Activated CD4-positive, alpha-beta memory T cell treated with anti-CD3 and anti-CD28 coated beads for 36 hours (primary cell): ENCODE measurements at regions of chr18 and their contacts with region 1.

Region 1: DNA sequence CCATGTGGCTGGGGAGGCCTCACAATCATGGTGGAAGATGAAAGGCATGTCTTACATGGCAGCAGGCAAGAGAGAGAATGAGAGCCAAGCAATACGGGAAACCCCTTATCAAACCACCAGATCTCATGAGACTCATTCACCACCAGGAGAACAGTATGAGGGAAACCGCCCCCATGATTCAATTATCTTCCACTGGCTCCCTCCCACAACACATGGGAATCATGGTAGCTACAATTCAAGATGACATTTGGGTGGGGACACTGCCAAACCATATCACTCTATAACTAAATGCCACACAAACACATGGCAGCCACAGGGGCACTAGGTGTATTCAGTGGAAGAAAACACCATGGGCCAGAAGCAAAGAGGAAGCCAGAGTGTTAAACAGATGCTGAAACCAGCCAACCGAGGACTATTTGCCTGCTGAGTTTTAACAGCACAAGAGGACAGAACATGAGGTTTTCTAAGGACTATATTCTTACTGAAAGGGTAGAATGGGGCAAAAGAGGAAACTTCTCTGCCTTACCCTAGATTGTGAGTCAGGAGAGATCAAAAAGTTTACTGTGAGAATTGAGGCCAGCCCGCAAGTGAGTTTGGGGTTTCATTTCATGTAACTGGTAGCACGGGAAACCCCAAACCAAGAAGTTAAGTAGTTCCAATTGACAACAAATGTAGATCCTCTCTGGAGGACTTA is 49.2 kb downstream of the SIGLEC15 start:
- DNase-seq: peak; percentile 87
- H3K4me3 Mint-ChIP-seq: peak overlapping the region; percentile 1
- H3K27ac Mint-ChIP-seq: peak overlapping the region; percentile 94
- H3K4me1 Mint-ChIP-seq: peaks cover 31% of the 10 kb centered on the region
- H3K27me3 Mint-ChIP-seq: no peaks in the 10 kb centered on the region

Region 2: GRCh38 chr18:45480219-45481015 is 394.2 kb before region 1 on chr18:
- CTCF ChIA-PET with region 1: no interaction called
- POLR2A ChIA-PET with region 1: no interaction called
- intact Hi-C with region 1: no loop called
- DNase-seq: no peak
- H3K4me3 Mint-ChIP-seq: no peak overlapping the region
- H3K27ac Mint-ChIP-seq: no peak overlapping the region
- H3K4me1 Mint-ChIP-seq: no peaks in the 10 kb centered on the region
- H3K27me3 Mint-ChIP-seq: peaks cover 16% of the 10 kb centered on the region

Region 3: GRCh38 chr18:45690975-45691815 is 183.4 kb before region 1 on chr18:
- CTCF ChIA-PET with region 1: interaction called, 91 read pairs
- POLR2A ChIA-PET with region 1: no interaction called
- intact Hi-C with region 1: loop called (anchors 1 kb)
- DNase-seq: peak; percentile 84
- H3K4me3 Mint-ChIP-seq: no peak overlapping the region
- H3K27ac Mint-ChIP-seq: no peak overlapping the region
- H3K4me1 Mint-ChIP-seq: peaks cover 42% of the 10 kb centered on the region
- H3K27me3 Mint-ChIP-seq: peaks cover 6% of the 10 kb centered on the region

Region 4: DNA sequence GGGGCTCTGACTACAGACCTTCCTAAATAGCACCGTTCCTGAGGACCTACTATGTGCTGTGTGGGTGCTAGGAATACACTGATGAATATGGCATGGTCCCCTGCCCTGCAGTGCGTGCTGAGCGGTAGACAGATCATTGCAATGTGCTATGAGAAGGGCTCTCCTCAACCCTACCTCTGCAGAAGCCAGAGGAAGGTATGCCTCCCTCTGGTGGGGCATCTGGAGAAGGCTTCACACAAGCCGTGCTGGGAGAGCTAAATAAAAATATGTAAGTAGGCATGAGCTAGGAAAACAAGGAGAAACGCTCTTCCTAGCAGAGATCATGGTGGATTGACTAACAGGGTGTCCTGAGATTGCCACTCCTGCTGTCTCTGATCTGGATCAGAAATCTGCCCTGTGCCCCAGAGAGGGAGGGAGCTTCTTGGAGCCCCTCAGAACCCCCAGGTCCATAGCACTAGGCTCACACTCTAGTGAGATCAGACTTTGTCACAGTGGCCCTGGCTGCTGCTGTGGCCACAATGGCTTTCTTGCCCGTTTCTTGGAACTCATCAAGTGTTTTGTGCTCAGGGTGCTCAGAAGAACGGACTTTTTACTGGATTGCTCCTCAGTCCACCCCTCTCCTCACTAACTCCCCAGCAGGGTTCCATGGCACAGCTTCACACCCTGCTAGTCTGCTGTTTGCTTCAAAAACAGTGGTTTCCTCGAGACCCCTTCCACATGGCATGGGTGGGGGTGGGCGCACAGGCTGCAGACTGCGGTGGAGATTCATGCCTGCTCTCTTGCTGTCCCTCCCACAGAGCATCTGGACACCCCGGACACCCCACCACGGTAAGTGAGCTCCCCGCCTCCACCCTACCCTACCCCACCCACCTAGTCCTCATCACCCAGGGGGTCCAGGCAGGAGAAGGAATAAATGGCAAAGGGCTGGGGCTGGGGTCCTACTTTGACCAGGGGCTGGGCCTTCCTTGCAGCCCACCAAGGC is 34.9 kb before region 1 on chr18:
- CTCF ChIA-PET with region 1: interaction called, 6 read pairs
- POLR2A ChIA-PET with region 1: no interaction called
- intact Hi-C with region 1: loop called (anchors 2 kb)
- DNase-seq: peak; percentile 48
- H3K4me3 Mint-ChIP-seq: no peak overlapping the region
- H3K27ac Mint-ChIP-seq: no peak overlapping the region
- H3K4me1 Mint-ChIP-seq: peaks cover 7% of the 10 kb centered on the region
- H3K27me3 Mint-ChIP-seq: peaks cover 29% of the 10 kb centered on the region

Region 5: GRCh38 chr18:45935591-45936335 is 61.1 kb after region 1 on chr18:
- CTCF ChIA-PET with region 1: interaction called, 7 read pairs
- POLR2A ChIA-PET with region 1: no interaction called
- intact Hi-C with region 1: loop called (anchors 2 kb)
- DNase-seq: no peak
- H3K4me3 Mint-ChIP-seq: no peak overlapping the region
- H3K27ac Mint-ChIP-seq: no peak overlapping the region
- H3K4me1 Mint-ChIP-seq: peaks cover 32% of the 10 kb centered on the region
- H3K27me3 Mint-ChIP-seq: no peaks in the 10 kb centered on the region

Region 6: DNA sequence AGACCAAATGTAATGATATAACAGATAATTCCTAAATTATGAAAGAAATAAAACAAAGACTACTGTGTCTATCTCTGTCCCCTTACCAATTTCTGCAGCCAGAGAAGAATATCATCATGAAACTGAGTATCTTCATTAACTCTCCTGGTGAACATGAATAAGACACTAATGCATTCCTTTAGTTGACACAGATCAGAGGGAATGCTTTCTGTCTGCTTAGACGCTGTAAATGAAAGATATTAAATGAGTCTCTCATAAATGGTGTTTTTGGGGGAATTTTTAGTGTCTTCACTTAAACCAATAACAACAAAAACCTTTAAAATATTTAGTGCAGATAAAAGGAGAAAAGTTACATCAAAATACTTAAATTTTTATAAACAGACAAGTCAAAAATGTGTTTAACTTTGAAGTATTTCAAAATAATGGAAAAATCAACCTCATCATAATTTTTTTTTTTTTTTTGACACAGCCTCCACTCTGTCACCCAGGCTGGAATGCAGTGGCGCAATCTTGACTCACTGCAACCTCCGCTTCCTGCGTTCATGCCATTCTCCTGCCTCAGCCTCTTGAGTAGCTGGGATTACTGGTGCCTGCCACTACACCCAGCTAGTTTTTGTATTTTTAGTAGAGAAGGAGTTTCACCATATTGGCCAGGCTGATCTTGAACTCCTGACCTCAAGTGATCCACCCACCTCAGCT is 76.5 kb after region 1 on chr18:
- CTCF ChIA-PET with region 1: no interaction called
- POLR2A ChIA-PET with region 1: no interaction called
- intact Hi-C with region 1: no loop called
- DNase-seq: no peak
- H3K4me3 Mint-ChIP-seq: no peak overlapping the region
- H3K27ac Mint-ChIP-seq: no peak overlapping the region
- H3K4me1 Mint-ChIP-seq: peaks cover 23% of the 10 kb centered on the region
- H3K27me3 Mint-ChIP-seq: no peaks in the 10 kb centered on the region

Region 7: DNA sequence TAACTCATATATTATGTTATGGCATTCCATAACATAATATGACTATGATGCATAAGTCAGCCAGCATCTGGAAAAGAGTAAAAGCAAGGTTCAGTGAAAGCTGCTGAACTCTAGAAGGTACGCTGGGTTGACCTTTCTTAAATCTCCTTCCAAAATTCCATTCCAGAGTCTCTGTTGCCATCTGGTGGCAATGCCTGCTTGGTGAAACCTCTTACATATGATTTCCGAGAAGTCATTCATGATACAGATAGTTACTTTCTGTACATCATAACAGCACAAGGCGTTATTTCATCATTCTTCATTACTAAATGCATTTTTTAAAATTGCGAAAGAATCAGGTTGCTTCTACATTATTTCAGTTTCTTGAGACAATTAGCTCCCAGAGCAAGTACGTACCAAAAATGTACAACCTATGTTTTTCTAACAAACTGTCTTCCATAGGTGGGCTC is 99.5 kb after region 1 on chr18:
- CTCF ChIA-PET with region 1: interaction called, 3 read pairs
- POLR2A ChIA-PET with region 1: interaction called, 3 read pairs
- intact Hi-C with region 1: loop called (anchors 1 kb)
- DNase-seq: peak; percentile 83
- H3K4me3 Mint-ChIP-seq: no peak overlapping the region
- H3K27ac Mint-ChIP-seq: peak overlapping the region; percentile 78
- H3K4me1 Mint-ChIP-seq: peaks cover 5% of the 10 kb centered on the region
- H3K27me3 Mint-ChIP-seq: no peaks in the 10 kb centered on the region